ENCODE measurements at regions of chr3 and their contacts with region 1.

Region 1: DNA sequence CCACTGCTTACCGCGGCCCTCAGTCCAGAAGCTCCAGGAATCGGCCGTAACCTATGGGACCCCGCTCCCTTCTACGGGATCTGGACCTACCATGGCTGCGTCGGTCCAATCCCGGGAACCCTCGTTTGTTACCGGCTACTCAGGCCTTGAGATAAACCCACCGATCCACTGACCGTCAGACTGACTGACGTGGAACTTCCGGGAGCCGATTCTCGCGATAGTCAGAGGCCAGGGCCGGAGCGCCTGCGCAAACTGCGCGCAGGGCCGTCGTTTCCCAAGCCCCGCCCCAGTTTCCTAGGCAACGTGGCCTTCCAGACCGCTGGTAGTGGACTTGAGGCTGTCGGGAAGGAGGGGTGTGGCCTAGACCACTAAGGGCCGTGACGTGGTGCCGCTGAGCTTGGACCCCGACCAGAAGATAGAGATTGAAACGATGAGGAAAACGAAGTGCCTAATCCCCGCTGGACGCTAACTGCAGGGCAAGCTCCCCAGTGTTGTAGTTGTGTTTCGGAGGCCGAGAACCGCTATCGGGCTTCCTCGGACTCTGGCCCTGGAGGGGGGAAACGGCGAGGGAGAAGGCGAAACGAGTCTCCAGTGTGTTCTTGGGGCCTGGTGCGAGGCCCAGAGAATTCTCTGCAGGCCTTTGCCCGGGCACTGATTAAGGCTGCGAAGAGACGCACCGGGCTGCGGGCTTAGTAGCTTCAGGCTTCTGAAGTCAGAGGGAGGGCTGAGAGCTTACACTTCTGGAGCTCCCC is at the start of gene COPB2:
- DNase-seq: peak; percentile 92 to 98 (median 96)
- ATAC-seq: peak; percentile 85
- H3K4me3 ChIP-seq: peak within 1 kb of the TSS; percentile 72 to 94
- H3K4me3 Mint-ChIP-seq: peak within 1 kb of the TSS; percentile 100
- H3K27ac ChIP-seq: peak within 1 kb of the TSS; percentile 92 to 95
- H3K27ac Mint-ChIP-seq: peak within 1 kb of the TSS; percentile 99
- H3K4me1 ChIP-seq: peaks cover 18% of the 10 kb centered on the region
- H3K4me1 Mint-ChIP-seq: peaks cover 54% of the 10 kb centered on the region
- H3K27me3 ChIP-seq: no peaks in the 10 kb centered on the region
- H3K27me3 Mint-ChIP-seq: no peaks in the 10 kb centered on the region
- CTCF ChIP-seq: no peak
- total RNA-seq, gene COPB2: 12.8 to 16.4 TPM

Region 2: DNA sequence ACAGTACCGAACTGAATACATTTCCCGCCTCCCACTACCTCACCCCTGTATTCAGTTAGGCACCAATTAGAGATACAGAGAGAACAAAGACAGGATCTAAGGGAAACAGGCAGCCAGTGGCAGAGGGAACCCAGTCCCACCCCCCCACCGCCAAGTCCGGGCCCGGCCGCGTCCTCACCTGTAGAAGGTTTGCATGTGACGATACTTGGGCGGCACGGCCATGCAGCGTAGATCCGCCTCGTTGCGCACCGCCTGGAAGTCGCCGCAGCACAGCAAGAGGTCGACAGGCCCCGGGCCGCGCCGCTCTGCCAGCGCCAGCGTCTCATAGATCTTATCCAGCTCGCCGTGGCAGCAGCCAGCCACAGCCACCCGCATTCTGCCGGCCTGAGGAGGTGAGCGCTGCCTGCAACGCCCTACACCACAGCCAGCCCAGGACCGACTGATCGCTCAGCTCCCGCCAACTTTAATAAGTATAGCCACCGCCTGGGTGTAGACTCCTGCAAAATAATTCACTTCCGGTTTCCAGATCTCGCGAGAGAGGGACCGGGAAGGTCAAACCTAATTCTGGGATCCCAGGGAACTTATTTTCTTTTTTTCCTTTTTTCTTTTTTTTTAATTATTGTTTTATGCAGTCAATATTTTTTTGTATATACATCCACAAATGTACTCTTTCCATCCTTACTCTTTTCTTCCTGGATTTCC is 1215.1 kb before region 1 on chr3 and contains the start of gene DBR1:
- CTCF ChIA-PET with region 1: no interaction called
- POLR2A ChIA-PET with region 1: no interaction called
- intact Hi-C with region 1: loop called in 1 of 2 experiments (anchors 1 kb)
- DNase-seq: peak; percentile 51 to 89 (median 74)
- ATAC-seq: peak; percentile 87
- H3K4me3 ChIP-seq: peak within 1 kb of the TSS; percentile 76
- H3K4me3 Mint-ChIP-seq: peak within 1 kb of the TSS; percentile 99
- H3K27ac ChIP-seq: peak within 1 kb of the TSS; percentile 71 to 79
- H3K27ac Mint-ChIP-seq: peak within 1 kb of the TSS; percentile 98
- H3K4me1 ChIP-seq: peaks cover 21% of the 10 kb centered on the region
- H3K4me1 Mint-ChIP-seq: peaks cover 40% of the 10 kb centered on the region
- H3K27me3 ChIP-seq: no peaks in the 10 kb centered on the region
- H3K27me3 Mint-ChIP-seq: no peaks in the 10 kb centered on the region
- CTCF ChIP-seq: no peak
- total RNA-seq, gene DBR1: 31.2 to 31.9 TPM

Region 3: DNA sequence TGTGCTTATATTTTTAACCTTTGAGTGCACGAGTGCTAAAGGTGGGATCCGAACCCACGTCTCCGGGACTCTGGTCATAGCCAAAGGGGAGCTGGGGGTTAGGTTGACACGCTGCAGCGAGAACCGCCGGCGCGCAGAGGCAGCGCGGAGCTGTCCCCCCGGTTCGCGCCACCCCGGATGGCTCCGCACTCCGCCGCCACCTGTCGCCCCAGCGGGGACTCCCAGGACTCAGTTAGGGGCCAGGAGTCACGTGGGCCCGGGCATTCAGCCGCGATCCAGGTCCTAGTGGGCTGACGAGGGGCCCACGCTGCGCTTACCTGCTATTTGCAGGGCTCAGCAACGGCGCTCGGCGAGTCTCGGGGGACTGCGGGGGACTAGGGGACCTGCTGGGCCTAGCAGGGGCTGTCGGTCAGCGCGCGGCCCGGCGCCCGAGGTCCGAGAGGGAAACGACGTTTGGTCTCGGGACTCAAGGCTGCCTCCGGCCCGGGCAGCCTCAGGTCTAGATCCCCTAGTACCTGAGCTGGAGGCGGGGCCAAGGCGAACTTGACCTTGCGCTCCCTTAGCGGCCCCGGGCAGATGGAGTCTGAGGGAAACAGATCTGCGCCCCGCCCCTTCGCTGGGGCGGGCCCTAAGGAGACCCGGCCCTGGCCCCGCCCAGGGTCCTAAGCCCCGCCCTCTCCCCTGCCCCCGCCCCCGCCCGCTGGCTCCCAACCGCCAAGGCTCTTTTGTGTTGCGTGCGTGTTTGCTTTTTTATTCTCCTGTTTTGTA is 287.9 kb after region 1 on chr3 and contains the start of gene NMNAT3:
- CTCF ChIA-PET with region 1: no interaction called
- POLR2A ChIA-PET with region 1: no interaction called
- intact Hi-C with region 1: loop called in 1 of 2 experiments (anchors 1 kb)
- DNase-seq: peak; percentile 62 to 87 (median 80)
- ATAC-seq: peak; percentile 99
- H3K4me3 ChIP-seq: peak within 1 kb of the TSS; percentile 89 to 100
- H3K4me3 Mint-ChIP-seq: peak within 1 kb of the TSS; percentile 83
- H3K27ac ChIP-seq: peak within 1 kb of the TSS; percentile 70 to 71
- H3K27ac Mint-ChIP-seq: peak within 1 kb of the TSS; percentile 53
- H3K4me1 ChIP-seq: peaks cover 6% of the 10 kb centered on the region
- H3K4me1 Mint-ChIP-seq: peaks cover 10% of the 10 kb centered on the region
- H3K27me3 ChIP-seq: no peaks in the 10 kb centered on the region
- H3K27me3 Mint-ChIP-seq: no peaks in the 10 kb centered on the region
- CTCF ChIP-seq: no peak
- total RNA-seq, gene NMNAT3: 0.81 to 1.2 TPM

Region 4: DNA sequence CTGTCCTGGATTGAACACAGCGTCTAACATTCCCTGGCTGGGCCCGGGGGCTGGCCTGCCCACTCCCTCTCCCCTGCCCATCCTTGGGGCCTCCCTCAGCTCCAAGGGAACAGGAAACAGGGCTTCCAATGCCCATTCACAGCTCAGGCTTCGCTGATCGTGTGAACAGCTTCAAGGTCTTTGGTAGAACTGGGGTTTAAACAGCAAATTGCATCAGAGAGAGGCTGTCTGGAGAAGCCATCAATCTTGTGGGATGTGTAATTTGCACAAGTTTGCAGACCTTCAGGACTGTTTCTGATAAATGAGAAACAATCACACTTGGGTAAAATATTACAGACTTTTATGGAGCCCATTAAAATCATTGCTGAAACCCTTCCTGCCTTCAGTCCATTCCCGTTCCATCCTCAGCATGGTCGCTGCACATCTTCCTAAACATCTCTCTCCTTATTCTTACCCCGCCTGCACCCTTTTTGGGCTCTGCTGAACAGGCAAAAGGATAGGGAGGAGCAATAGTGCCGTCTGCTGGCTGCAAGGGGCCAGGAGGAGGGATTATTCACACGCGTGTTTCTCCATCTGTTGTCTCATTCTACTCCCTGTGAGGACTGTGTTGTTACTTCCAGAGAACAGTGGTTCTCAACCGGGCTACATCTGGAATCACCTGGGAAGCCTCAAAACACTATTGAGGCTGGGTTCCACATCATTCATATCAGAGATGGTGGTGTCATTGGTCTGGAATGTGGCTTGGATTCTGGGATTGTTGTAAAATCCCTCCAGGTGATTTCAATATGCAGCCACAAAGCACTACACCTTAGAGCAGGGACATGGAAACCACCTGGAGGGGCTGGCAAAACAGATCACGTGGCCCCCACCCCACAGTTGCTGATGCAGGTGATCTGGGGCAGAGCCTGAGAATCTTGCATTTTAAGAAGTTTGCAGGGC is 661.7 kb after region 1 on chr3:
- CTCF ChIA-PET with region 1: no interaction called
- POLR2A ChIA-PET with region 1: no interaction called
- intact Hi-C with region 1: no loop called
- DNase-seq: no peak
- ATAC-seq: no peak
- H3K4me3 ChIP-seq: no peak overlapping the region
- H3K4me3 Mint-ChIP-seq: no peak overlapping the region
- H3K27ac ChIP-seq: no peak overlapping the region
- H3K27ac Mint-ChIP-seq: no peak overlapping the region
- H3K4me1 ChIP-seq: no peaks in the 10 kb centered on the region
- H3K4me1 Mint-ChIP-seq: no peaks in the 10 kb centered on the region
- H3K27me3 ChIP-seq: no peaks in the 10 kb centered on the region
- H3K27me3 Mint-ChIP-seq: peaks cover 6% of the 10 kb centered on the region
- CTCF ChIP-seq: no peak

Measured in CD8-positive, alpha-beta T cell (primary cell).